OCI-LY7 (cell line): ENCODE measurements at regions of chr11 and their contacts with region 1.

Region 1: DNA sequence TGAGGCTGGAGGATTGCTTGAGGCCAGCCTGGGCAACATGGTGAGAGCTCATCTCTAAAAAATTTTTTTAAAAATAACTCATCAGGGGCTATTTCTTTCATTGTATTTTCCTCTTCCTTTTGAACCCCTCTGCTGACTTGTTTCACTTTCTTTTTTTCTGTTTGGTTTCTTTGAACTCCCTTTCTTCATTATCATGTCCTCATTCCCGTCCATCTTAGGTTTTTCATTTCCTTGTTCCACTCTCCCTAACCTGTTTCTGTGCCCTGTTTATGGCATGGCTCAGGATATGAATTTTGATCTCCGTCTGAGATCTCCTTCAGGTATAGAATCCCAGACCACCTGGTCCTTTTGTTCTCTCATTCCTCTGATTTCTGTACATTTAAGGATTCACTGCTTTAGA is 12.5 kb downstream of the MARK2 start:
- DNase-seq: no peak
- H3K4me3 ChIP-seq: no peak overlapping the region
- H3K27ac ChIP-seq: peak overlapping the region; percentile 24
- H3K4me1 ChIP-seq: peaks cover 15% of the 10 kb centered on the region
- CTCF ChIP-seq: no peak

Region 2: GRCh38 chr11:63888170-63889086 is 37.1 kb after region 1 on chr11:
- CTCF ChIA-PET with region 1: no interaction called
- POLR2A ChIA-PET with region 1: no interaction called
- intact Hi-C with region 1: loop called (anchors 5 kb)
- DNase-seq: peak; percentile 82
- H3K4me3 ChIP-seq: peak overlapping the region; percentile 63
- H3K27ac ChIP-seq: peak overlapping the region; percentile 47
- H3K4me1 ChIP-seq: peaks cover 31% of the 10 kb centered on the region
- CTCF ChIP-seq: no peak